Activated CD8-positive, alpha-beta T cell treated with anti-CD3 and anti-CD28 coated beads for 36 hours (primary cell): ENCODE measurements at regions of chr3 and their contacts with region 1.

Region 1: GRCh38 chr3:61381745-61382392 is 130.6 kb upstream of the FHIT start:
- DNase-seq: no peak
- ATAC-seq: peak; percentile 51
- H3K4me3 Mint-ChIP-seq: no peak overlapping the region
- H3K27ac Mint-ChIP-seq: no peak overlapping the region
- H3K4me1 Mint-ChIP-seq: peaks cover 3% of the 10 kb centered on the region
- H3K27me3 Mint-ChIP-seq: peaks cover 20% of the 10 kb centered on the region
- CTCF ChIP-seq: peak; percentile 70

Region 2: DNA sequence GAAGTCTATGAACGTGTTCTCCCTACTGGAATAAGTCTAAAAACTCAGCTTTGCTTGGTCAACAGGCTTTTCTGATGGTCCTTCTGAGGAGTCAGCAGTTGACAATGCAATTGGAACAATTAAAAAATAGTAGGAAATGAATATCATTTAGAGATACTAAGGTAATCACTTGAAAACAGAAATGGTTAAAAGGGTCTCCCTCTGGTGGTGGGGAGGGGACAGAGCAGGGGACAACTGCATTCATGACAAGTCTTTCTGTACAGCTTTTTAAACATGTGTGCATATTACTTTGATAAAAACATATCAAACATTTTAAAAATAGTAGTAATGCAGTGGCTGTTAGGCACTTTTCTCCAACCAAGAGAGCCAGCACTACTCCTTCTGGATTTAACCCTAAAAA is 10.7 kb before region 1 on chr3:
- CTCF ChIA-PET with region 1: interaction called, 15 read pairs
- POLR2A ChIA-PET with region 1: no interaction called
- intact Hi-C with region 1: no loop called
- DNase-seq: peak; percentile 53
- ATAC-seq: no peak
- H3K4me3 Mint-ChIP-seq: no peak overlapping the region
- H3K27ac Mint-ChIP-seq: no peak overlapping the region
- H3K4me1 Mint-ChIP-seq: no peaks in the 10 kb centered on the region
- H3K27me3 Mint-ChIP-seq: no peaks in the 10 kb centered on the region
- CTCF ChIP-seq: peak; percentile 64